Left lung (tissue), 14 donors: ENCODE measurements at regions of chr22 and their contacts with region 1.

Region 1: DNA sequence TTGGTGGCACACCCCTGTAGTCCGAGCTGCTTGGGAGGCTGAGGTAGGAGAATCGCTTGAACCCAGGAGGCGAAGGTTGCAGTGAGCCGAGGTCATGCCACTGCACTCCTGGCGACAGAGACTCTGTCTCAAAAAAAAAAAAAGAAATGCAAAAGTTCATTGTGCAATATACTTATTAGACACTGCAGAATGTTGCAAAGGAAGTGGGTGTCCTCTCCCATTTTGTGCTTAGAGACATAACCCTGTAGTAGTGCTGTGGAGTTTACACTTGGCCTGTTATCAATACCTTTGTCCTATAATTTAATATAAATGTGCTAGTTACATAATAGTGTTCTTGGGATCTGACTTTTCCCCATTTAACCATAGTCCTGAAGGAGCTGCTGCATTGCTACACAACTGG is 9.4 kb downstream of the BCL2L13 start:
- DNase-seq: no peak
- ATAC-seq: peak; percentile 24
- H3K4me3 ChIP-seq: no peak overlapping the region
- H3K27ac ChIP-seq: peak overlapping the region in 1 of 2 donors; percentile 23
- H3K4me1 ChIP-seq: peaks cover 0 to 19% of the 10 kb centered on the region in 2 donors
- H3K27me3 ChIP-seq: no peaks in the 10 kb centered on the region
- CTCF ChIP-seq: no peak

Region 2: DNA sequence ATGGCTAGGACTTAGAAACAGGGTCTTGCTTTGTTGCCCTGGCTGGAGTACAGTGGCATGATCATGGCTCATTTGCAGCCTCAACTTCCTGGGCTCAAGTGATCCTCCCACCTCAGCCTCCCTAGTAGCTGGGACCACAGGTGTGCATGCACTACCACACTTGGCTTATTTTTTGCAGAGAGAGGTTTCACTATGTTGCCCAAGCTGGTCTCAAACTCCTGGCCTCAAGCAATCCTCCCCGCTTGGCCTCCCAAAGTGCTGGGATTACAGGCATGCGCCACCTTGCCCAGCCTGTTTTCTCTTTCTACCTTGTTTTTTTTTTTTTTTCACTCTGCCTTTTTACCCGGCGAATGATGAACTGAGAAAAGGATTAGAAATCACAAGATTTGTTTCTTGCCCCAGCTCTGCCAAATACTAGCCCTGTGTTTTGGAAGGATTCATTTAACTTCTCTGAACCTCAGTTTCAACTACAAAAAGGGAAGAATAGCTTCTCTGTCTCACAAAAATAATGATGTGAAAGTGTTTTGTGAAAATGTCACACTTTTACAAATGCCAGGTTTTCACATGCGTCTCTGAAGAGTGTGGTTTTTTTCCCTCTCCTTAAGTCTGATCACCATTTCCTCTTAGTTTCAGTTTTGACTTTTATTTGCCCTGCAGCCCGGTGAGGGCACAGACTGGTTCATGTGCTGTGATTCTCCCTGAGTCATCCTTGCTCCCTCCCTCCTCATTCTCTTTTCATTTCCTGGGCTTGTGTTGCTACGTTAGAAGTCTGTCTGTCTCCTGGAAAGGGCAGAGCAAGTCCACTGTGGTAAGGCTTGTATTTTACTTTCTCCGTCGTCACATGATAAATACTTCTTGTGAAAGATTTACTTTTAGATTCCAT is 58.3 kb after region 1 on chr22:
- intact Hi-C with region 1: loop called in 1 of 2 experiments (anchors 10 kb)
- DNase-seq: peak in 2 of 4 donors; percentile 14 to 48
- ATAC-seq: peak; percentile 95
- H3K4me3 ChIP-seq: peak overlapping the region in 1 of 2 donors; percentile 22
- H3K27ac ChIP-seq: peak overlapping the region; percentile 76
- H3K4me1 ChIP-seq: peaks cover 4 to 23% of the 10 kb centered on the region in 2 donors
- H3K27me3 ChIP-seq: no peaks in the 10 kb centered on the region
- CTCF ChIP-seq: no peak

Region 3: DNA sequence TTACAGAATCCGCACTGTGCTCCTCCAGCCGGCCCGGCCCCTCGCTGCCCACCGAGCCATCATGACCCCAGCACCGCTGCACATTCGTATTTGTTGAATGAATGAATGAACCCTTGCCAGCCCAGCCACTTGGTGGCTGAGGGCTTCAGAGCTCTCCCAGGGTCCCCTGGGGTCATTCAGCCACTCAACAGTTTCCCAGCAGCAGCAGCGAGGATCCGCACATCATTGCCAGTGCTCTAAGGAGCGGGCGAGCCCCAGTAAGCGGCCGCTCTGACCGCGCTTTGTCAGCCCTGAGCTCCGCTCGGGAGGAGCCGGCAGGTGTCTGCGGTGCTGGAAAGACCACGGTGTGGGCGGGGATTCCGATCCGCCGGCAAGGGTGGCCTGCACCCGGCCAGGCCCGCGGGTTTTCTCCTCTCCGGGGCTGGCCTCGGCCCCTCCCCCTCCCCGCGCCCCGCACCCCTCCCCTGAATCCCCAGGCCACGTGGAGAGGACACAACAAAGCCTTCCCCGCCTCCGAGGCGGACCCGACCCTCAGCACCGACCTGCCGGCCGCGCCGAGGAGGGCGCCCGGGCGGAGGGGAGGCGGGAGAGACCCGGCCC is 125.7 kb after region 1 on chr22:
- intact Hi-C with region 1: loop called in 1 of 2 experiments (anchors 10 kb)
- DNase-seq: peak in 1 of 4 donors; percentile 89
- ATAC-seq: peak; percentile 60
- H3K4me3 ChIP-seq: peak overlapping the region; percentile 64 to 86
- H3K27ac ChIP-seq: peak overlapping the region; percentile 48 to 89
- H3K4me1 ChIP-seq: peaks cover 7 to 88% of the 10 kb centered on the region in 2 donors
- H3K27me3 ChIP-seq: no peaks in the 10 kb centered on the region
- CTCF ChIP-seq: no peak